PC-3 (cell line): ENCODE measurements at regions of chr14 and their contacts with region 1.

Region 1: GRCh38 chr14:43778686-43779639 is 728.1 kb downstream of the FSCB start:
- DNase-seq: peak; percentile 48
- ATAC-seq: peak; percentile 73
- H3K4me3 ChIP-seq: no peak overlapping the region
- H3K27ac ChIP-seq: peak overlapping the region; percentile 13
- H3K4me1 ChIP-seq: peaks cover 4% of the 10 kb centered on the region; the same call in 1 of the 2 replicates
- H3K27me3 ChIP-seq: no peaks in the 10 kb centered on the region
- CTCF ChIP-seq: no peak

Region 2: DNA sequence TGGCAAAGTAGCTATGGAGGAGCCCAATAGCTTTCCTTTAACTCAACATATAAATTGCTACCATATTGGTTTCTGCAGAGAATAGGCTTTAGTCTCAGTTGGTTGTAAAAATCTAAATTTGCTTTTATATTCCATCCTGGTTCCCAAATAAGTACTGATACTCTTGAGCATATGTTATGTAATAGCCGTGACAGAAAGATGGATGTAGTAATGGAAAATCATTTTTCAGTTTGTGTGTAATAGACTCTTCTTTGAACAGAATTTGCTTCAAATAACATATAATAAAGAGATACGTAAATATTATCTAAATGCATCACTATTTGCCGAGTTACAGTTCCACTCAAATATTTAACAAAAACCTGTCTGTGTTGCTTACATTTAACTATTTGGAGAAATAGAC is 1900.6 kb before region 1 on chr14:
- CTCF ChIA-PET with region 1: no interaction called
- POLR2A ChIA-PET with region 1: interaction called, 11 read pairs
- intact Hi-C with region 1: no loop called
- DNase-seq: no peak
- ATAC-seq: no peak
- H3K4me3 ChIP-seq: no peak overlapping the region
- H3K27ac ChIP-seq: no peak overlapping the region
- H3K4me1 ChIP-seq: no peaks in the 10 kb centered on the region
- H3K27me3 ChIP-seq: no peaks in the 10 kb centered on the region
- CTCF ChIP-seq: no peak

Region 3: DNA sequence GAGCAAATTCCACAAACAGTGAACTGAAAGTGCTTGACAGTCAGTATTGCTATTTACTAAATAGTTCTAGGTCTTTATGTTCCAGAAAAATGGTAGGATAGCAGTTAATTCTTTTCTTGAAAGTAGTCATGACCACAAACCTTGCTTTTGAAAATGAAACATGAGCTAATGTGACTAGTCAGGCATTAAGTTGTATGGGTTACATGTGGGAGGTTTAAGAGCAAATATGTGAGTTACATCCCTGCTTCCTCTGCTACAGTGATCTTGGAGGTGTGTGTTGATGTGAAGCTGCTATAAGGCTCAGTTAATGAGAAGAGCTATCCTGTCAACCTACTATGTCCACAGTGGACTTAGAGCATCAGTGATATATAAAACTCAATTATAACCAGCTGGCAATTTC is 13.5 kb before region 1 on chr14:
- CTCF ChIA-PET with region 1: no interaction called
- POLR2A ChIA-PET with region 1: no interaction called
- intact Hi-C with region 1: no loop called
- DNase-seq: peak; percentile 14
- ATAC-seq: peak; percentile 56; the same call in 1 of the 2 replicates
- H3K4me3 ChIP-seq: no peak overlapping the region
- H3K27ac ChIP-seq: no peak overlapping the region
- H3K4me1 ChIP-seq: no peaks in the 10 kb centered on the region
- H3K27me3 ChIP-seq: no peaks in the 10 kb centered on the region
- CTCF ChIP-seq: no peak